Activated CD8-positive, alpha-beta T cell treated with anti-CD3 and anti-CD28 coated beads for 36 hours (primary cell): ENCODE measurements at regions of chr7 and their contacts with region 1.

Region 1: GRCh38 chr7:48312151-48312550 is 140.9 kb downstream of the ABCA13 start:
- DNase-seq: no peak
- ATAC-seq: no peak
- H3K4me3 Mint-ChIP-seq: no peak overlapping the region
- H3K27ac Mint-ChIP-seq: no peak overlapping the region
- H3K4me1 Mint-ChIP-seq: no peaks in the 10 kb centered on the region
- H3K27me3 Mint-ChIP-seq: no peaks in the 10 kb centered on the region
- CTCF ChIP-seq: no peak

Region 2: GRCh38 chr7:48299580-48300169 is 12.5 kb before region 1 on chr7:
- CTCF ChIA-PET with region 1: interaction called, 13 read pairs
- POLR2A ChIA-PET with region 1: no interaction called
- intact Hi-C with region 1: no loop called
- DNase-seq: peak; percentile 69
- ATAC-seq: peak; percentile 65
- H3K4me3 Mint-ChIP-seq: no peak overlapping the region
- H3K27ac Mint-ChIP-seq: no peak overlapping the region
- H3K4me1 Mint-ChIP-seq: peaks cover 2% of the 10 kb centered on the region
- H3K27me3 Mint-ChIP-seq: no peaks in the 10 kb centered on the region
- CTCF ChIP-seq: peak; percentile 71